Activated naive CD4-positive, alpha-beta T cell treated with anti-CD3 and anti-CD28 coated beads for 36 hours (primary cell): ENCODE measurements at regions of chr12 and their contacts with region 1.

Region 1: DNA sequence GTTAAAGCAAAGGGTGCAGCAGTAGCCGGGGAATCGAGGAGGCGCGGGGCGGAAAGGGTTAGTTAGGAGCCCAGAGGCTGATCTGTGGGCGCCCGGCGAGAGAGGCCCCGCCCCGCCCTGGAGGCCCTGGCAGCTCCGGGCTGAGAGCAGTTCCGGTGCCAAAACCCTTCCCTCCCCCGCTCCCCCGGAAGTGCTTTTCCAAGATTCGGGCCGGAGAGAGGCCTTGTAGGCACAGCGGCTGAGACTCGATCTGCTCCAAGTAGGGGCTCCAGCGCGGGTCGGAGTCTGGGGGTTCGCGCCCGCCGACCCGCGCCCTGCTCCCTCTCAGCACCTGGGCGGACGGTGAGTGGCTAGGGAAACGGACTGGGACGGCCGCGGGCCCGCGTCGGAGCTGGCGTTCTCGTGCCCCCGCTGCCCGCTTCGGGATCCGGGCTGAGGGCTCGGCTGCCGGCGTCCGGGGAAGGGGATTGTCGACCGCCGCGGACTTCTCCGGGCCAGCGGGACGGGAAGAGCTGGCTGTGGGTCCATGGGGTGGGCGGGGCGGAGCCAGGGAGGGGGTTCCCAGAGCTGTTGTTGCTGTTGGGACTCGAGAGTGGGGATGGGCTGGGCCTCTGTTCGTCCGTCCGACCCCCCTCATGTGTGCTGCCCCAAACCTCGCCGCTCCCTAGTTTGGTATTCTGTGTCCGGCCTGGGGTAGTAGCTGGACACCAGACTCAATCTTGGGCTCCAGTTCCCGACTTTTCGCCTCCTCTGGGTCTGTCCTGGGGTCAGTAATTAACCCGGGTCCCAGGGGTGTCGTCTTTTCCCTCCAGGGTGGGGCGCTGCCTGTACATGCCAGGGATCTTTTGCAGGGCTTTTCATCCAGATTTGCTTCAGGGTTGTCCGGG is at the start of gene FRS2:
- DNase-seq: peak; percentile 93
- H3K4me3 Mint-ChIP-seq: peak within 1 kb of the TSS; percentile 98
- H3K27ac Mint-ChIP-seq: peak within 1 kb of the TSS; percentile 96
- H3K4me1 Mint-ChIP-seq: peaks cover 42% of the 10 kb centered on the region
- H3K27me3 Mint-ChIP-seq: no peaks in the 10 kb centered on the region
- total RNA-seq, gene FRS2: 7.9 TPM

Region 2: GRCh38 chr12:69511469-69512267 is 41.2 kb after region 1 on chr12:
- CTCF ChIA-PET with region 1: no interaction called
- intact Hi-C with region 1: no loop called
- DNase-seq: no peak
- H3K4me3 Mint-ChIP-seq: no peak overlapping the region
- H3K27ac Mint-ChIP-seq: no peak overlapping the region
- H3K4me1 Mint-ChIP-seq: peaks cover 62% of the 10 kb centered on the region
- H3K27me3 Mint-ChIP-seq: no peaks in the 10 kb centered on the region

Region 3: DNA sequence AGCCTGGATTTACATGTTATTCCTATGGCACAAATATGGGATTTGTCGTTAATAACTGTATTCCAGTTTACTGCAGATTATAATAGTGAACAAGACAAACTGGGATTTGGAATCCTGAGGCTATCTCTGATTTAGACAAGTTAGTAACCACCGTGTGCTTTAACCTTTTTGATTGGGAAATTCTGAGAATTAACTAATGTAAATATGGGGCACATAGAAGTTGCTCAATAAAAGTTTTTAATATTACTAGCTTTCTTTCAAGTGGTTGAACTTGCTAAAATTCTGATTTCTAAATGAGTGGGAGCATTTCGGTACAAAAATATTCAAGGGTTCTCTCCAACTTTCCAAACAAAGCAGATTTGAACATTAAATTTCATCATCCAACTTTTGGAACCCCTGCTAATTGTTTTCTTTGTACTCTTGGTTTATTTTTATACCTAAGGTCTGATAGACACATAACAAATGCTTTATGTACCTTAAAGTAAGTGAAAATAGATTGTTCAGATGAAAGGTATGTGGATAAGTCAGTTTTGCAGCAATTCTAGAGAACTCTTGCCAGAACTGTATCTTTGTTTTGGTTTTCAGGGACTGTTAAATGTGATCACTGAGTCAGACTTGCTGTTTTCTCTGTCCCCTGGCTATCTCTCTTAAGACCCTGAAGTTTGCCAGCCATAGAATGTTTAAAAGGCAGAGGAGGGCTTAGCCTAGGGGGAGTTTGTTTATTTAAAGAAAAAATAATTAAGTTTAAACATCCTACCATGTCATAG is 57.3 kb after region 1 on chr12:
- CTCF ChIA-PET with region 1: no interaction called
- intact Hi-C with region 1: loop called (anchors 5 kb)
- DNase-seq: no peak
- H3K4me3 Mint-ChIP-seq: no peak overlapping the region
- H3K27ac Mint-ChIP-seq: peak overlapping the region; percentile 41
- H3K4me1 Mint-ChIP-seq: peaks cover 33% of the 10 kb centered on the region
- H3K27me3 Mint-ChIP-seq: no peaks in the 10 kb centered on the region

Region 4: DNA sequence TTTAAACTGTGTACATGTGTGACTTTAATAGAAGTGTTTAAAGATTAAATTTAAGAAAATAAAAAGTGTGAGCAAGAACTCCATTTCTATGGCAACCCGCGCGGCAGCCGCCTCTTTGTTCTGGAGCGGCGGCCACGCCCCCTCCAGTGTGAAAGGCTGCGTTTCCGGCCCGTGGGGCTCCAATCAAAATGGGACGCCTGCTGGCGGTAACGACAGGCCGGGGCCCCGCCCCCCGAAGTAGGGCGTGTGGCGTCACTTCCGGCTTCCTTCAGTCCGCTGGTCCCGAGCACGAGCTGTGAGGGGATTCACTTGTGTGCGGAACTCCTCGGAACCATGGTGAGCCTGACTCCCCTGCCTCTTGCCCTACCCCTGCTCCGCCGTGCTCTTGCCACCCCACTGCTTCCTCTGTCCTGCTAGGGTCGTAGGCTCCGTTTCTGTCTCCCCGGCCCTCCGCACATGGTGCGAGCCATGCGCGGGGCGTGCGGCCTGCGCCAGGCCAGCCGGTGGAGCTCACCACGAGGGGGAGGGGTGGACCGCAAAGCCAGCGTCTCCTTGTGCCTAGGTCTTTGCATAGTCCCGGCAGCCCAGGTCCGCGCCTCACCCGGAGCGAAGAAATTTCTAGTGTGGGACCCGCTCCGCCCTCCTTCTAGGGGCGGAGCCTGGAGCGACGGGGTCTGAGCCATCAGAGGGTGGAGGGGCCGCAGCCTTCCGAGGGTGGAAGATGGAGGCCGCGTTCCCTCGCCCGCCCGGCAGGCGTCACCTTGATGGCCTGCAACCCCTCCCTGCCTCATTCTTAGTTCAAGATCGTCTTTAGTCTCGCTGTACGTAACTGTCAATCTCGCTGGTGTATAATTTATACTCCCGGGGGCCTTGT is 115.0 kb after region 1 on chr12 and contains the start of gene CCT2:
- CTCF ChIA-PET with region 1: no interaction called
- intact Hi-C with region 1: loop called (anchors 1 kb)
- DNase-seq: peak; percentile 97
- H3K4me3 Mint-ChIP-seq: peak within 1 kb of the TSS; percentile 86
- H3K27ac Mint-ChIP-seq: peak within 1 kb of the TSS; percentile 92
- H3K4me1 Mint-ChIP-seq: peaks cover 27% of the 10 kb centered on the region
- H3K27me3 Mint-ChIP-seq: no peaks in the 10 kb centered on the region
- total RNA-seq, gene CCT2: 268 to 280 TPM

Region 5: GRCh38 chr12:70467908-70468733 is 997.7 kb after region 1 on chr12:
- CTCF ChIA-PET with region 1: no interaction called
- intact Hi-C with region 1: no loop called
- DNase-seq: no peak
- H3K4me3 Mint-ChIP-seq: no peak overlapping the region
- H3K27ac Mint-ChIP-seq: no peak overlapping the region
- H3K4me1 Mint-ChIP-seq: no peaks in the 10 kb centered on the region
- H3K27me3 Mint-ChIP-seq: peaks cover 12% of the 10 kb centered on the region